CD4-positive, alpha-beta memory T cell (primary cell): ENCODE measurements at regions of chr9 and their contacts with region 1.

Region 1: DNA sequence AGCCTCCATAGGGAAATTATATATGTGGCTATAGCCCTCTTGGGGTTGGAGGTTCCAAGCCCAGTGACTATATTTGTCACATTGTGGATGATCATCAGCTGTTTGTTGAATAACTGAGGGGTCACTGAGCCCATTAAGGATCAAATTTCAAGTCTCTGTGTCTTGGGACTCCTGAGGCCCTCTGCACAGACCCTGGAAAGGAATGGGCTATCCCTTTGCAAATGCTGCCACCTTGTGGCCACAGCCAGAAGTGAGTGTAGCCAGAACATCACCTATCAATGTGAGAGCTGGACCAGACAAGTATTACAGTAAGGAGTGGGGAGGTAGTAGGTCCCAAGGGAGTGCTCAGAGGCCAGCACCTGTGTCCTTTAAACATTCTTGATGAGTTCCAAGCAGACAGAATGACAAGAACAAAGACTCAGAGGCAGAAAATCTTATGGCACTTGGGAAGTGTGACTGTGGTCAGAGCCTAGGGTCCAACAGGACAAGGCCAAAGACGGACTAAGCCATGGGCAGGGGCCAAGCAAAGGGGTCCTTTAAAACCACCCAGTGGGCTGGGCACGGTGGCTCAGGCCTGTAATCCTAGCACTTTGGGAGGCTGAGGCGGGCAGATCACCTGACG is 8.2 kb downstream of the RPP25L start:
- DNase-seq: peak; percentile 67 to 78 (median 74)
- H3K4me3 ChIP-seq: no peak overlapping the region
- H3K4me3 Mint-ChIP-seq: no peak overlapping the region
- H3K27ac ChIP-seq: no peak overlapping the region
- H3K27ac Mint-ChIP-seq: no peak overlapping the region
- H3K4me1 ChIP-seq: no peaks in the 10 kb centered on the region
- H3K4me1 Mint-ChIP-seq: peaks cover 0 to 2% (median 0%) of the 10 kb centered on the region in 4 donors
- H3K27me3 ChIP-seq: no peaks in the 10 kb centered on the region
- H3K27me3 Mint-ChIP-seq: peaks cover 0 to 3% of the 10 kb centered on the region in 2 donors

Region 2: GRCh38 chr9:34437006-34437925 is 166.5 kb before region 1 on chr9:
- CTCF ChIA-PET with region 1: interaction called, 9 read pairs
- POLR2A ChIA-PET with region 1: no interaction called
- intact Hi-C with region 1: loop called (anchors 1 kb)
- DNase-seq: peak; percentile 65 to 69 (median 67)
- H3K4me3 ChIP-seq: no peak overlapping the region
- H3K4me3 Mint-ChIP-seq: no peak overlapping the region
- H3K27ac ChIP-seq: no peak overlapping the region
- H3K27ac Mint-ChIP-seq: no peak overlapping the region
- H3K4me1 ChIP-seq: peaks cover 11% of the 10 kb centered on the region
- H3K4me1 Mint-ChIP-seq: peaks cover 12 to 18% (median 13%) of the 10 kb centered on the region in 4 donors
- H3K27me3 ChIP-seq: no peaks in the 10 kb centered on the region
- H3K27me3 Mint-ChIP-seq: no peaks in the 10 kb centered on the region

Region 3: DNA sequence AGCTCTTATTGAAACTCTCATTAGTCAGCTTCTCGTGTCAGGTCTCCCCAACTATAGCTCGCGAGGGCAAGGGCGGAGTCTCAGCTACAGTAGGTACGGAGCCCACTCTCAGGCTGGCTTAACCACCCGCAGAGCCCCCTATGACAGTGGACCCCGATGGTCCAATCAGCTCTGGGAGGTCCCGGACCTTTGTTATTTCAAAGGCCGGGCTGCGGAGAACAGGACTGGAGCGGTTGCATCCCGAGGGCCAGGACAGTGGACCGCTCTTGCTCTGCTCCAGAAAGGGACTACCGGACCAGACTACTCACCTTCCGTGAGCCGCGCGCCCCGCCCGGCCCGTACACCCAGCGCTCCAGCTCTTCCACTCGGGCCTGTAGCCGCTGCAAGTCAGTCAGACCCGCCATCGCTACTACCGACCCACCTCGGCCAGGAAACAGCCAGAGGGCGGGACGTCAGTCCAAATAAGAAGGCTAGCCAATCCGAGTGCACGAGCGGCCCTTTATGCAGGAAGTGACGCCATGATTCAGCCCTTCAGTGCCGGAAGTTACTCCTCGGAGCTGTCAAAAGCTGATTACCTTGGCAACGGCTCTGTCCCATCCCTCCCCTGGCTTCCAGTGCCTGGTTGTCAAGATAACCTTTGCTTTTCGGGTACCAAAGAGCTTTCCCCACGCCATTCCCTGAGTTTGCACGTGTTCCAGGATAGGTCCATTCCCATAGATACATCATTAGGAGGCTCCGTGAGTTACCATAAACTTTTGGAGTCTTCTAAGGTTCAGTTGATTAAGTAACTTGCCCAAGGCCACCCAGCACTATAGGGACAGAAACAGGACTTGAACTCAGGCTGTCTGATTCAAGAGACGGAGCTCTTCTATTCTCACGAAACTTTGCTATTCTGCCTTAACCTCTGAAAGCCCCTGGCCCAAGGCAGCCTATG is 16.6 kb after region 1 on chr9 and contains the start of gene DCTN3:
- CTCF ChIA-PET with region 1: interaction called, 20 read pairs
- POLR2A ChIA-PET with region 1: no interaction called
- intact Hi-C with region 1: no loop called
- DNase-seq: peak; percentile 89 to 97 (median 93)
- H3K4me3 ChIP-seq: peak within 1 kb of the TSS; percentile 71 to 90
- H3K4me3 Mint-ChIP-seq: peak within 1 kb of the TSS; percentile 93 to 98 (median 96)
- H3K27ac ChIP-seq: peak within 1 kb of the TSS; percentile 69
- H3K27ac Mint-ChIP-seq: peak within 1 kb of the TSS; percentile 82 to 98 (median 95)
- H3K4me1 ChIP-seq: peaks cover 27% of the 10 kb centered on the region
- H3K4me1 Mint-ChIP-seq: peaks cover 17 to 41% (median 29%) of the 10 kb centered on the region in 4 donors
- H3K27me3 ChIP-seq: peaks cover 29% of the 10 kb centered on the region
- H3K27me3 Mint-ChIP-seq: peaks cover 19 to 26% of the 10 kb centered on the region in 2 donors
- total RNA-seq, gene DCTN3: 57.8 to 62.0 TPM